Tibial artery (tissue), 4 donors: ENCODE measurements at regions of chr19 and their contacts with region 1.

Region 1: GRCh38 chr19:51226067-51226466 is 1.2 kb downstream of the CD33 start:
- DNase-seq: no peak
- H3K4me3 ChIP-seq: peak overlapping the region in 1 of 2 donors; percentile 18
- H3K27ac ChIP-seq: no peak overlapping the region
- H3K4me1 ChIP-seq: no peaks in the 10 kb centered on the region
- H3K27me3 ChIP-seq: no peaks in the 10 kb centered on the region
- CTCF ChIP-seq: no peak

Region 2: DNA sequence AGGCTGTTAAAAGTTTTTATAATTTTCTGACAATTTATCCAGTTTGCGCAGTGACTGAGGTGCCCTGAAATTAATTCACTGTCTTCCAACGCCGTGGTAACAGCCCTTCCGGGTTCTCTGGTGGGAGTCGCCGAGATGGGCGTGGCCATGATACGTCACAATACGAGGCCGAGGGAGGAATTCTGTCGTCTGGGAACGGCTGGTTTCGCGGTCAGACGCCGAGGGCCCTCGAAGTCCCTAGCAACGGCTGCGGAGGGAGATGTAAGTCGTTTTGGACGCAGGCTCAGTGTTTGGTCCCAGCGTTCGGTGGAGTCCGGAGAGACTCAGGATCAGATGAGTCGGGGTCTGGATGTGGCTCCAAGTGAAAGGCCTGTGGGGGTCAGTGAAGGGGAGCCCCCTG is 722.9 kb after region 1 on chr19:
- intact Hi-C with region 1: loop called (anchors 5 kb)
- DNase-seq: peak in 1 of 2 donors; percentile 34
- H3K4me3 ChIP-seq: peak overlapping the region; percentile 20 to 45
- H3K27ac ChIP-seq: peak overlapping the region in 1 of 2 donors; percentile 44
- H3K4me1 ChIP-seq: no peaks in the 10 kb centered on the region
- H3K27me3 ChIP-seq: no peaks in the 10 kb centered on the region
- CTCF ChIP-seq: no peak